Body of pancreas (tissue), 4 donors: ENCODE measurements at regions of chr1 and their contacts with region 1.

Region 1: DNA sequence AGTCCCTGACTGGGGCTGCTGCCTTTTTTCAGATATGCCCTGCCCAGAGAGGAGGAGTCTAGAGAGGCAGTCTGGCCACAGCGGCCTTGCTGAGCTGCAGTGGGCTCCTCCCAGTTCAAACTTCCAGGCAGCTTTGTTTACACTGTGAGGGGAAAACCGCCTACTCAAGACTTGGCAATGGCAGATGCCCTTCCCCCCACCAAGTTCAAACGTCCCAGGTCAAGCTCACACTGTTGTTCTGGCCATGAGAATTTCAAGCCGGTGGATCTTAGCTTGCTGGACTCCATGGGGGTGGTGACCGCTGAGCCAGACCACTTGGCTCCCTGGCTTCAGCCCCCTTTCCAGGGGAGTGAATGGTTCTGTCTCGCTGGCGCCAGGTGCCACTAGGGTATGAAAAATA is 18.3 kb upstream of the C1orf53 start:
- DNase-seq: peak; percentile 42 to 66 (median 55)
- ATAC-seq: peak; percentile 33
- H3K4me3 ChIP-seq: no peak overlapping the region
- H3K27ac ChIP-seq: no peak overlapping the region
- H3K4me1 ChIP-seq: peaks cover 8% of the 10 kb centered on the region
- H3K27me3 ChIP-seq: no peaks in the 10 kb centered on the region
- CTCF ChIP-seq: no peak
- POLR2A ChIP-seq: no peak

Region 2: GRCh38 chr1:197521118-197521739 is 362.9 kb before region 1 on chr1:
- intact Hi-C with region 1: loop called (anchors 10 kb)
- DNase-seq: peak in 1 of 4 donors; percentile 7
- ATAC-seq: no peak
- H3K4me3 ChIP-seq: no peak overlapping the region
- H3K27ac ChIP-seq: no peak overlapping the region
- H3K4me1 ChIP-seq: no peaks in the 10 kb centered on the region
- H3K27me3 ChIP-seq: no peaks in the 10 kb centered on the region
- CTCF ChIP-seq: peak in 6 of 7 experiments; percentile 41 to 58 (median 51)
- POLR2A ChIP-seq: no peak

Region 3: DNA sequence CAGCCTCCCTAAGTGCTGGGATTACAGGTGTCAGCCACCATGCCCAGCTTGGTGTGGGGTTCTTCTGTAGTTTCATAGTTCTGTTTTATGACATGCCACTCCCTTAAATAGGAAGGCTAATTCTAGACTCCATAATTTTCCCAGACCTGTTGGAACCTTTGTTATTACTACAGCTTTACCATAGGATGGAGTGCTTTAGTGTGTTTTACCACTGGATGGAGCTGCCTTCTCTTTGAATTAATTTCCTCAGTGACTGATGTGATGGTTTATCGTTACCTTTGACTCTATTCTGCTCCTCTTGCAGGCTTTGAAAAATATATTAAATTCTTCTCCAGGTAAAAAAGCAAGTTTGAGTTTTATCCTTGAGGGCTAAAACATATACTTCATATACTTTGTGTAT is 188.0 kb after region 1 on chr1:
- intact Hi-C with region 1: no loop called
- DNase-seq: no peak
- ATAC-seq: no peak
- H3K4me3 ChIP-seq: no peak overlapping the region
- H3K27ac ChIP-seq: no peak overlapping the region
- H3K4me1 ChIP-seq: no peaks in the 10 kb centered on the region
- H3K27me3 ChIP-seq: no peaks in the 10 kb centered on the region
- CTCF ChIP-seq: no peak
- POLR2A ChIP-seq: no peak